Sciatic nerve (tissue), 2 donors: ENCODE measurements at regions of chr17 and their contacts with region 1.

Region 1: DNA sequence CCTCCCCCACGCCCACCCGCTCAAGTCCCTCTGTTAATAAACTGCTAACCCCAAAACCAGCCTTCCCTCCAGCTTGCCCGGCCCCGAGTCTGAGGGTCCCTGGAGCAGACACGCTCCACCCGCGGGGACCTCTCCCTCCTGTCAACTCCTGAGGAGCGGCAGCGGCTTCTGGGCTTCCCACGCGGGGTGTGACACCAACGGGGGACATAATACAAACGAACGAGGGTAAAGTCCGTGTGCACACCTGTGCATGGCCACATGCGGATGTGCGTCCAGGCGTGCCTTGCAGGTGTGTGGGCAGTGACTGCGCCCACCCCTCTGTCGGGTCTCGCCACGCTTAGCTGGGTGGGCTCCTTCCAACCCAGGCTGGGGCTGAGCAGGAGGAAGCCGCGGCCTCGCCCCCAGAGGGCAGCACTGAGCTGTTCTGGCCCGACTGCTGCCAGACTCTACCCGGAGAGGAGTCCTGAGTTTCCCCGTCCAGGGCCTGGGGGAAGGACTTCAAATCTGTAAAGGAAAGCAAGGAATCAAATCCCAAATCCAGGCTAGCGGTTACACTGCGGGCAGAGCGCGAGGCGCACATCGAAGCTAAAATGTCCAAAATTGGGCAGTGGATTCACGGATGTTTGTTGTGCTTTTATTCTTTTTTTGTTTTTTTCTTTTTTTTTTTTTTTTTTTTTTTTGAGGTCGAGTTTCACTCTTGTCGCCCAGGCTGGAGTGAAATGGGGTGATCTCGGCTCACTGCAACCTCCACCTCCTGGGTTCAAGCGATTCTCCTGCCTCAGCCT is 24.2 kb upstream of the KRT17 start:
- DNase-seq: peak; percentile 94
- ATAC-seq: peak; percentile 94

Region 2: GRCh38 chr17:41549596-41550039 is 99.0 kb before region 1 on chr17:
- intact Hi-C with region 1: loop called (anchors 5 kb)
- DNase-seq: no peak
- ATAC-seq: peak; percentile 5

Region 3: DNA sequence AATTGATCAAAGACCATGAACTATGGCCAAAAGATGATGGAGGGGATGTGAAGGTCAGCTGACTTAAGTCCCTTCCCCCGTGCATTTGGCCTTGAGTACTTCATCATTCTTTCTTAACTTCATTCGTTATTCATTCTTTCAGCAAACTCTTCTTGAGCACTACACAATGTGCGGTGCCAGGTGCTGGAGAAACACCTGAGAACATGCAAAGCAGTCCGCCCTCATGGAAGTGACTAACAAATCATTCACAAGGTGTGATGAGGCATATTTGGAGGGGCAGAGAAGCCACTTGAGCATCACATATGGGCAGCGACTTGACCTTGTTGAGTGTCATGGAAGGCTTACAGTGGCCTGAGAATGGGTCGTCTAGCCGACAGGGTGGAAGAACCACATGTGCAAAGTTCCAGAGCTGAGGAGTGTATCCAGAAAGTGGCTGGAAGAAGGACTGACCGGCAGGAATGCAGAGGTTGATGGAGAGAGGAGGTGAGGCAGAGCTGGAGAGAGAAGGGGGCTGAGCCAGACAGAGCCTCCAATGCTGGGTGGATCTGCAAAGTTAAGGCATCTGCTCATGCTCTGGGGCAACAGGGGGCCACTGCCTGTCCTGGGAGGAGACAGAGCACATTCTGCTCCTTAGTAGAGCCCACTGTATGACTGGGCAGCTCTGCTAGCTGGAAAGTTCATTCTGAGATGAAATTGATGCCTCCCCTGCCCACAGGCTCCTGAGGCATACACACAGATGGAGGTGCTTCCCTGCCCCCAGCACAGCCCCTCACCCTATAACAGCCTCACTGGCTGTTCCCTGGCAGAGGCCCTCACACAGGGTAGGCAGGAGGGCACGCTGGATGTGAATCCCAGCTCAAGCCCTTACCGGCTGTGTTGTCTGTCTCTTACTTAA is 15.1 kb after region 1 on chr17:
- intact Hi-C with region 1: loop called (anchors 2 kb)
- DNase-seq: no peak
- ATAC-seq: no peak